Right ventricle myocardium inferior (tissue), 1 donor: ENCODE measurements at regions of chr6 and their contacts with region 1.

Region 1: GRCh38 chr6:89352278-89353117 is at the start of gene UBE2J1:
- DNase-seq: peak; percentile 98
- ATAC-seq: peak; percentile 99
- total RNA-seq, gene UBE2J1: 15.0 TPM

Region 2: DNA sequence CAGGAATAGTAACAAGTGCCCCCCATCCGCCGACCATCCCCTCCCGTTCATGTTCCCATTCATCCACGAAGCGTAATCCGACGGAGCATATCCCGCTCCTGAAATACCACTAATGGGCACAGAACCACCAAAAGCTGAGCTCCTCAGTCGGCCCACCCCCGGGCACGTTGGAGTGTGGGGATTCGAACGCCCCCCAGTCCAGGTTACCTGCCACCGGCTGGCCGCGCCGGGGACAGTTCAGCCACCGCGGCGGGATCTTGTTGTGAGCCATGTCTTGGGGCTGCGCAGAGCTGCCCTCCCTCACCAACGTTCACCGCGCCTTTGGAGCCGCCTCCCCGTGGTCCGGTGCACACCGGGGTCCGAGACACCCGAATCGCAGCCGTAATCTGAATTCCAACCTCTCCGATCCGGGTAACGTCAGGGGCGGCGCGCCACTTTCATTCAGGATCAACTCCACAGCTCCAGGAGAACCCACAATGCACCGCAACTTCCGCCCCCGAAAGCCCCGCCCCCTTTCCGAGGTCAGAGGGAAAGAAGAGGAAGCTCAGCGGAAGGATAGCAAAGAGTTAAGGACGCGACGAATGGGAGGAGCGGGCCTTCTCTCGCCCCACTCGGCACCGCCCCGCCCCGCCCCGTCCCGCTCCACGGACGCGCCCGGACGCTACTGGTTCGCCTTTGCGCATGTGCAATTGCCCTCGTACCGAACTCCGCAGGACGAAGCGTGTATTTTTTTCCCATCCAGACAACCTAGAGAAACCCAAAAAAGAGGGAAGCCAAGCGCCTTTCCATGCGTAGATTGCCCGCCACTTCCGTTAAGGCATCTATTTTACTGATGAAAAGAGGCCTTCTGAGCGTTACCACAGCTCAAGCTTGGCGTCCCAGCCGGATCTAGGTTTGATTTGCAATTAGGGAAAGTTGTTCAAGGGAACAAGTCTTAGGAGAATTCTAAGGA is 389.1 kb before region 1 on chr6 and contains the start of gene RNGTT:
- intact Hi-C with region 1: loop called (anchors 10 kb)
- DNase-seq: peak; percentile 99
- ATAC-seq: peak; percentile 100
- total RNA-seq, gene RNGTT: 7.0 TPM

Region 3: DNA sequence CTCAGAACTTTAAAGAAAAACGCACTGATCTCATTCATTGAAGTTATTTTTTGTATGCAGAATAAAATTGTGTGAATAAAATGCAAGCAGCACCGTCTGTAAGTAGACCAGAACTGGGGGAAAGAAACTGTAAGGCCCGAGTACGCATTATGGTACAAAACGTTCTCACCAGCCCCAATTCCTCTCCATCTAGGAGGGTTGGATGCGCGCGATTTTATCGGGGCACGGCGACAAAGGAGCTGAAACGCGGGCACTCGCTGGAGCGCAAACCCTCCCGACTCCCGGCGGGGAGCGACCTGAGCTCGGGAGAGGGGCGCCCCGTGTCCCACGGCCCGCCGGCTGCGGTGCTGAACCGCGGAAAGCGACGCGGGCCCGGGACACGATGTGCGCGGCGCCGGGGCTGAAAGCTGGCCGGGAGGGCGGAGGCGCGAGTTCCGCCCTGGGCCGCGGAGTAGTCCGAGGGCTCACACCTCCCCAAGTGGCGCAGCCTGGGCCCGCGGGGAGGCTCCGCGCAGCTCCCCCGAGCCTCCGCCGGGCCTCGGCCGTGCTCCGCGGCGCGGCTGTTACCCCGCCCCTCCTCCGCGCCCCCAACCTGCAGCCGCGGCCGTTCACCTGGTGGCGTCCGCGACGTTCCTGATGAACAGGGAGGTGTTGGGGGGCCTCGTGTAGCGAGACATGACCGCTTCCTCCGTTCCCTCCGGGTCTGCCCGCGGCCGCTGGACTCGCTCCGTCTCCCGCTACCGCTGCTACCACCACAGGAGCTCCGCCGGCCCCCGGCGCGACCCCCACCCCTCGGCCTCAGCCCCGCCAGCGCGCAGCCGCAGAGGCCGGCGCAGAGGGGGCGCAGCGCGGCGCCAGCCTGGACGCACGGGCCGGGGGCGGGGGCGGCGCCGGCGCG is 235.0 kb before region 1 on chr6 and contains the start of gene SRSF12:
- intact Hi-C with region 1: loop called (anchors 10 kb)
- DNase-seq: peak; percentile 85
- ATAC-seq: peak; percentile 82
- total RNA-seq, gene SRSF12: 0.24 TPM

Region 4: DNA sequence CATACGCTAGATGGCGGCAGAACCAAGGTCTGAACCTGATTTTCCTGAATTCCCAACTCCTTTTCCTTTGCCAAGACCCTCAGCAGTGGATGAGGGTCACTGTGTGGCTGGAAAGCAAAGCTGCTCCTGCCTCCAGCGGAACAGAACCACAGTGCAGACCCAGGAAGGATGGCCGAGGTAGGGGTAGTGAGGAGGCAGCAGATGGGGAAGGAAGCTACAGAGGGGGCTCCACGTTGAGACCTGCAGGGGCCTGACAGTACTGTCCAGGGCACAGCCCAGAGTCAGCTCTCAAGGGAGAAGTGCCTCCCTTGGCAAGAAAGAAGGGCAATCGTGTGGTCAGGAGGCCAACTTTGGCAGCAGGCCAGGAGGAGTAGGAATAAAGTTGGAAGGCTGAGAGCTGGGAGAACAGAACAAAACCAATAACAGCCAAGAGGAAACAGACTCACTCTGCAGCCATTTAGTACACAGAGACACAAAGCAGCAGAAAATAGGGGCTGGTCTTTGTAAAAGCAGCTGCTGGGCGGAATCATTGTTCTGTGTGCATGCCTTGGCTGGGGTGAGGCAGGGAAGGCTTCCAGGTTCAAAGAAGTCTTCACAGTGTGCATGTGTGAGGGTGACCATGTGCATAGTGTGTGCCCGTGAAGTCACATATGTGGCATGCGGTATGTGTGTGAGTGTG is 40.5 kb before region 1 on chr6:
- intact Hi-C with region 1: loop called (anchors 2 kb)
- DNase-seq: peak; percentile 77
- ATAC-seq: peak; percentile 62